Lower lobe of right lung (tissue), 2 donors: ENCODE measurements at regions of chr16 and their contacts with region 1.

Region 1: DNA sequence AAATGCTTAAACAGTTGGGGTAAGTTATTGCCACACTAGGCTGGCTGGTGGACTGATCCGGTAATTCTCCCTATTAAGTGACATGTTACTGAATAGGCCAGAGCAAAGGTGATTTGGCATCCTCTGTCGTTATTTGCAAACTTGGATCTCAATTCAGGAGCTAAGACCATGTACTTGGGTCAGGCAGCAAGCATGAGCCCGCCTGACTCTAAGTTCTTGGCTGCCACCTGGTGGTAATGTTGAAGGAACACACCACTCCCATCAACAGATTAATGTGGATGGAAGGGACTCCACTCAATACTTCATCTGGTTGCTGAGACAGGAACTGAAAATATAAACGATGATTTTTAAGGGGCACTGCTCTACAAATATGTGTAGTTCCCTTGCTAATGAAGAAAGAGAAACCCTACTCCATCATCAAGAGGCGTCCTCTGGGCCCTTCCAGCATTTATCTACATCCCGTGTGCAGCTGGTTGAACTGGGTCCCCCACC is 70.8 kb downstream of the EMP2 start:
- DNase-seq: no peak
- ATAC-seq: peak; percentile 73 to 87
- H3K4me3 ChIP-seq: no peak overlapping the region
- H3K27ac ChIP-seq: no peak overlapping the region
- H3K4me1 ChIP-seq: peaks cover 5% of the 10 kb centered on the region
- H3K27me3 ChIP-seq: no peaks in the 10 kb centered on the region
- CTCF ChIP-seq: peak; percentile 79

Region 2: DNA sequence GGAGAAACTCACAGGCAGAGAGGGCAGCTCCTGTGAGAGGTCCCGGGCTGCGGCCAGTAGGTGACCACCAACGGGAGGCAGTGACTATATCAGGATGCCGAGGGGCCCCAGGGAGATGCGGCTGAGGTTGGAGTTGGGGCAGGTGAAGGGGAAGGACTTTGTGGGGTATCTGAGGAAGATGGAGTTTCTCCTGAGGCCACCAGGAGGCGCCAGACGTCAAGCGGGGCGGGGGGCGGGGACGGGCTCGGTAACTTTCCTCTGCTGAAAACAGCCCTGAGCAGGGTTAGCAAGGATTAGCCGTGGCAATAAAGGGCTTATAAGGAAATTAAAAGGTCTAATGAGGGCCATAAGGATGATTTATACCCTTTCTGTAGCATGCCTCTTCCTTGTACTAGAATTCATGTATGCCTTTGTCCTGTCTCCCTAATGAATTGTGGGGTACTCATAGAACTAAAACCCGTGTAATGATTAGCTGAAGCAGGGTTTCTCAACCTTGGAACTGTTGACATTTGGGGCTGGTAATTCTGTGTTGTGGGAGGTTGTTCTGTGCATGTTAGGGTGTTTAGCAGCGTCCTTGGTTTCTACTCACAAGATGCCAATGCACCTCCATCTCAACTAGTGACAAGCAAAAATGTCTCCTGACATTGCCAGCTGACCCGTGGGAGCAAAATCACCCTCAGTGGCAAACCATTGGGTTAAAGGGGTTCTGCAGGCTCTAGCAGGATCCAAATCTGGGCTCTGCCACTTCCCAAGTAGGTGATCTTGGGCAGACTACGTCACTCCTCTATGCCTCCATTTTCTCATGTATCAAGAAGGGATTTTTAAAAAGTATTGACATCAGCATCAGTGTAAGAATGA is 252.6 kb before region 1 on chr16:
- intact Hi-C with region 1: loop called (anchors 5 kb)
- DNase-seq: no peak
- ATAC-seq: peak; percentile 76 to 86
- H3K4me3 ChIP-seq: no peak overlapping the region
- H3K27ac ChIP-seq: no peak overlapping the region
- H3K4me1 ChIP-seq: no peaks in the 10 kb centered on the region
- H3K27me3 ChIP-seq: no peaks in the 10 kb centered on the region
- CTCF ChIP-seq: peak; percentile 62

Region 3: DNA sequence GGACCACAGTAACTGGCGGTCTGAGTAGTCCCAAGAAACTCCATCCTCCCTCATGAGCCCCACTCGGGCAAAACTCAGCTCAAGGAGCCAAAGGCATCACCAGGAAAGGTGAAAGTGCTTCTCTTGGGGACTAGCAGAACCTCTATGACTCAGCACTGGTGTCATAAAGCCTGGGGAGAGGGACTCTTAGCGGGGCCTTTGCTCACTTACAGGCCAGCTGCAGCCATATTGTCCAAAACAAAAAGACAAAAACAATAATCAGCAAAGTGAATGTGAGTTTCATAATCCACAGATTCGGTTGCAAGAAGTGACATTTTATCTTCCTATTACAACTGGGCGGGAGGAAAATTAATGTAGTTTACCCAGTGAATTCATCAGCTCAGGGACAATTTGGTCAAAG is 185.2 kb after region 1 on chr16 and contains the start of gene TEKT5:
- intact Hi-C with region 1: no loop called
- DNase-seq: no peak
- ATAC-seq: no peak
- H3K4me3 ChIP-seq: no peak within 1 kb of the TSS
- H3K27ac ChIP-seq: no peak within 1 kb of the TSS
- H3K4me1 ChIP-seq: no peaks in the 10 kb centered on the region
- H3K27me3 ChIP-seq: no peaks in the 10 kb centered on the region
- CTCF ChIP-seq: no peak
- total RNA-seq, gene TEKT5: not detected

Region 4: DNA sequence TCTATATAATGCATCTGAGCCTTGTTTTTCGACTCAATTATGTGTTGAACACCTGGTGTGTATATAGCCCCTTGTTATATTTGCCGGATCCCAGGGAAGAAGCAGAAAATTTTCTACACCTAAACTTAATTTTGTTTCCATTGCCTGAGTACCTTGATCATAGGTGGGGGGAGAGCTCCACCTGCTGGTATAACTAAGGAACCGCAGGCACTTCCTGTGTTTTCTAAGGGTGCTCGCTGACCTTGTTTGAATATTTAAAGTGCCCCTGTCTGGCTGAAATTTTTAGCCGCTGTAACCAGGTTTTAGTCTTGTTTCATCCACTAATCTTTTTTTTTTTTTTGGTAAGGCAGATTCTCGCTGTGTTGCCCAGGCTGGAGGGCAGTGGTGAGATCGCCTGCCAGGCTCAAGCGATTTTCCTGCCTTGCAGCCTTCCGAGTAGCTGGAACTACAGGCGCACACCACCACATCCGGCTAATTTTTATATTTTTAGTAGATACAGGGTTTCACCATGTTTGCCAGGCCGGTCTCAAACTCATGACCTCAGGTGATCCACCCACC is 227.6 kb after region 1 on chr16:
- intact Hi-C with region 1: loop called (anchors 10 kb)
- DNase-seq: no peak
- ATAC-seq: peak; percentile 89 to 95
- H3K4me3 ChIP-seq: peak overlapping the region; percentile 30
- H3K27ac ChIP-seq: peak overlapping the region; percentile 73
- H3K4me1 ChIP-seq: peaks cover 24% of the 10 kb centered on the region
- H3K27me3 ChIP-seq: no peaks in the 10 kb centered on the region
- CTCF ChIP-seq: peak; percentile 95